ENCODE measurements at regions of chr1 and their contacts with region 1.

Region 1: GRCh38 chr1:77683160-77684148 is 996 bp upstream of the ZZZ3 start:
- DNase-seq: peak; percentile 90
- H3K4me3 Mint-ChIP-seq: peak overlapping the region; percentile 96
- H3K27ac Mint-ChIP-seq: peak overlapping the region; percentile 95
- H3K4me1 Mint-ChIP-seq: peaks cover 29% of the 10 kb centered on the region
- H3K27me3 Mint-ChIP-seq: no peaks in the 10 kb centered on the region

Region 2: DNA sequence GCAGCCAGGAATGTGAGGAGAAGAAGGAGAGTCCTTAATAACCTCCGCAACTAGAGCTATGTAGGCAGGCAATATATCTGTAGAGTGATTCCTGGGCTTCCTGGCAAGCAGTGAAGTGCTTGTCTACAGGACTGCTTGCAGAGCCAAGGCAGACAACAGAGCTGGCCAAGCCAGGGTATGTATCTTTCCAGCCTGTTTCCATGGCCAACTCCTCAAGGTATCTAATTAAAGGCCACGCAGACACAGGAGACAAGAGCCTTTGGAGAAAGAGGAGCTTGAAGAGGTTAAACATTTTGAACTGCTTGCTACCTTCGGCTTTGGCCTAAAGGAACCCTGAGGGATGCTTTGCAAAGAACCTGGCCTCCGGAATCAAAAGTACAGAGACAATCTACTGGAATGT is 601.6 kb before region 1 on chr1:
- intact Hi-C with region 1: no loop called
- DNase-seq: no peak
- H3K4me3 Mint-ChIP-seq: no peak overlapping the region
- H3K27ac Mint-ChIP-seq: no peak overlapping the region
- H3K4me1 Mint-ChIP-seq: no peaks in the 10 kb centered on the region
- H3K27me3 Mint-ChIP-seq: peaks cover 4% of the 10 kb centered on the region

Region 3: GRCh38 chr1:77143529-77144121 is 539.8 kb before region 1 on chr1:
- intact Hi-C with region 1: loop called (anchors 5 kb)
- DNase-seq: no peak
- H3K4me3 Mint-ChIP-seq: no peak overlapping the region
- H3K27ac Mint-ChIP-seq: no peak overlapping the region
- H3K4me1 Mint-ChIP-seq: no peaks in the 10 kb centered on the region
- H3K27me3 Mint-ChIP-seq: no peaks in the 10 kb centered on the region

Region 4: DNA sequence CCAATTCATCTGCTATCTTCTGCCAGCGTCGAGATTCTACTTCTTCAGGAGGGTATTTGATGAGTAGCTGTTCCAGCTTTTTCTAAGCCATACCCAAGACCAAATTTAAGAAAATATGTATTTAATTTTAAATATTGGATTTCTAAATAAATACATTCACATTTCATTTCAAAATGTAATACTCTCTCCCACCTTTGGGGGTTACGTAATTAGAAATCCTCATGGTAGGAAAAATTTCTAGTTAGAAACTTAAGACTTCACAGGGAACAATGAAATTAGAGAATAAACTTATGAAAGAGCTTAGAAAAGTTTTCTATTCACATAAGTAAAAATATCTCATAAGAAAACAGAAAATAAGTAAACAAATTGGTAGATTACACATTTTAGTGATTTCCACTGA is 103.9 kb before region 1 on chr1:
- intact Hi-C with region 1: loop called (anchors 5 kb)
- DNase-seq: no peak
- H3K4me3 Mint-ChIP-seq: no peak overlapping the region
- H3K27ac Mint-ChIP-seq: no peak overlapping the region
- H3K4me1 Mint-ChIP-seq: no peaks in the 10 kb centered on the region
- H3K27me3 Mint-ChIP-seq: no peaks in the 10 kb centered on the region

Region 5: GRCh38 chr1:77779529-77780281 is 96.3 kb after region 1 on chr1 and contains the start of gene MIGA1:
- intact Hi-C with region 1: loop called (anchors 1 kb)
- DNase-seq: peak; percentile 77
- H3K4me3 Mint-ChIP-seq: peak within 1 kb of the TSS; percentile 98
- H3K27ac Mint-ChIP-seq: peak within 1 kb of the TSS; percentile 87
- H3K4me1 Mint-ChIP-seq: peaks cover 39% of the 10 kb centered on the region
- H3K27me3 Mint-ChIP-seq: peaks cover 4% of the 10 kb centered on the region
- total RNA-seq, gene MIGA1: 8.0 and 8.6 TPM in 2 replicates

Region 6: DNA sequence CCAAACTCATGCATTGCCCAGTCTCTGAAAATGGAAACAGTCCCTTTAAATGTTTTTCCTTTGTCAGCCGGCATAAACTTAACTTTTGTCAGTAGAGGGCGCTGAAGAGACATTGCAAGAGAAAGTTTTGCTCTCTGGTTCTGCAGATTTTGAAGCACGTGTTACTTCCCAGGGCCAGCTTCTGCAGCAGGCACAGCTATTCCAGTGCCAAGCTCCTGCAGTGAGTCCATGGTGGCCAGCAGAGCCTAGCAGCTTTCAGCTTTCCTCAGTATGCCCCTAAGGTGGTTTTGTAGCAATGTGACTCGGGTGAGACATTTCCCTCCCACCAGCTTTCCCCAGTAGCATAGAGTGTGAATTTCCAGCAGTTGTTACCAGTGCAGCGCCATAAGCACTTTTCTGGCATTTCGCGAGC is 934.2 kb after region 1 on chr1:
- intact Hi-C with region 1: loop called (anchors 5 kb)
- DNase-seq: peak; percentile 53
- H3K4me3 Mint-ChIP-seq: peak overlapping the region; percentile 51
- H3K27ac Mint-ChIP-seq: peak overlapping the region; percentile 30
- H3K4me1 Mint-ChIP-seq: peaks cover 42% of the 10 kb centered on the region
- H3K27me3 Mint-ChIP-seq: peaks cover 13% of the 10 kb centered on the region